Prostate gland (tissue), 2 donors: ENCODE measurements at regions of chr5 and their contacts with region 1.

Region 1: DNA sequence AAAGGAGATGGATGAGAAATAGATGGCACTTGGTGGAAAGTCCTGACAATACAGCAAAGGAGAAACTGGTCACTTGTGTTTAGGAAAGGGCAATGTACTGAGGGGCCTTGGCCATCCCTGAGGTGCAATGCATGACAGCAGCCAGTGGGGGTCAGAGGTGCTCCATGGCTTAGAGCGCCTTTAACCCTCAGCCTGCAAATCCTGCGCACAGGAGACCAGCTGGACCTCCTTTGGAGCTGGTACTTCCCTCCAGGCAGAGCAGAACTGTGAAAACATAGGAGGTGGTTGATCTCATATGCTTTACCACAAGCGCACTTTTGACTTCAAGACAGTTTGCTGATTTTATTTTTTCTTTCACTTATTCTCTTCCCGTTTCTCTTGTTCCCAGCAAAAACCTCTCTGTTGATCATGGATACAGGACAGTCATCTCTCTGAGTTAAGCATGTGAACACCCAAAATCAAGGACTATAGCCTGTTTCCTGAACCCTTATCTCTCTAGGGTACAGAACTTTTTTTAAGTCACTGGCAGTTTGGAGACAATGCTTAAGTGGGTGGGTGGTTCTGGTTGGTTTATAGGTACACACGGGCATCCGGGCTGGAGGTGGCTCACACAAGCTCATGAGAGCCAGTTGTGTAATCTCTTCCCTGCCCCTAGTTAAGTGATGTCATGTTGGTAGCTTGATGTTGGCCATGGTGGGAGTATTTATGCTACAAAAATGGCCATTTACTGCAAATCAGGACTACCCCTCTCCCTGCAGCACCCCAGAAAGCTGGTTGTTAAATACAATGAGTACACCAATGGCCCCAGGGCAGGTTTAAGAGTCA is 37.6 kb upstream of the ANKRD55 start:
- DNase-seq: peak; percentile 78
- H3K4me3 ChIP-seq: no peak overlapping the region
- H3K27ac ChIP-seq: no peak overlapping the region
- H3K4me1 ChIP-seq: no peaks in the 10 kb centered on the region
- H3K27me3 ChIP-seq: no peaks in the 10 kb centered on the region
- CTCF ChIP-seq: peak; percentile 86 to 96 (median 92)
- POLR2A ChIP-seq: no peak

Region 2: DNA sequence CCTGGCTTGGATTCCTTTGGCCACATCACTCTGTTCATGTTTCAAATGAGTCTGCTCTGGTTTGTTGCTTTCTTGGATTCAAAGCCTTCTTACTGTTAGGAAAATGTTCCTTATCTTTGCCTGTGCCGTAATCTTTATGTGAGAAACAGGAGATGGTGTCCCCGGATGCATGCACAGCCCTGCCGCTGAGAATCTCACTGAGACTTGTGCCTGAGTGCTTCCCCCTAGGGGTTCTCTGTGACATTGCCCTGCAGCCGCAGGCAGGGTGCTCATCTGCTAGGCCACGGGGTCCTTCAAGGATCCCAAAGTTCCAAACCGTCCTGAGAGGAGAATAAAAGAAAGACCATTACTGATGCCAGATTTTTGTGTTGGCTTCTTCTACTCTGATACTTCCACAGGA is 43.7 kb after region 1 on chr5:
- intact Hi-C with region 1: no loop called
- DNase-seq: no peak
- H3K4me3 ChIP-seq: no peak overlapping the region
- H3K27ac ChIP-seq: no peak overlapping the region
- H3K4me1 ChIP-seq: no peaks in the 10 kb centered on the region
- H3K27me3 ChIP-seq: no peaks in the 10 kb centered on the region
- CTCF ChIP-seq: peak in 2 of 4 experiments; percentile 12 to 20
- POLR2A ChIP-seq: no peak

Region 3: GRCh38 chr5:56396634-56397033 is 125.9 kb after region 1 on chr5:
- intact Hi-C with region 1: no loop called
- DNase-seq: no peak
- H3K4me3 ChIP-seq: no peak overlapping the region
- H3K27ac ChIP-seq: no peak overlapping the region
- H3K4me1 ChIP-seq: no peaks in the 10 kb centered on the region
- H3K27me3 ChIP-seq: no peaks in the 10 kb centered on the region
- CTCF ChIP-seq: no peak
- POLR2A ChIP-seq: no peak

Region 4: DNA sequence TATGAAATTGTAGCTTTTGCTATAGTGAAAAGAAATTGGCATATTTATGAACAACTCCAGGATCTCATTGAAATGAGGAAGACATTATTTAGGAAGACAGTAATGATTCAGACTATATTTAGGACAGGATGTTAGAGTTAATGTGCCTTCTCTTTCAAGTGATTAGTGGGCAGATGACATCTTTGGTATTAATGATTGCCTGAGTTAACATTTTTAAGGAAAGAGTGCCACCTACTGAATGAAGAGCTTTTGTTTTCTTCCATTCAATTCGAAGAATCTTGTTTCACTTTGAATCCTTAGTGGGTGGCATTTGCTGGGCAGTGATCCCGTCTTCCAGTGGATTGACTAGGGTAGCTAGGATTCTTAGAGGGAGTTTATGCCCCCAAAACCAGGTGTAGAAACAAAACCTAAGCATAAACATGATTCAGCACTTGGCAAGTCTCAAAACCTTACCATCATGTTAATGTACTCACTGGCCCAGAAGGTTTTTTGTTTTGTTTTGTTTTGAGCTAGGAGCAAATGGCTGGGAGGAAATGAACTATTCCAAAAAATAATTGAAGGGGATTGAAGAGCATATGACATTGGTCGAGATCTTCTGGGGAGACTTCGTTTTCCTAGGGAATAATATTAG is 567.7 kb after region 1 on chr5:
- intact Hi-C with region 1: loop called (anchors 2 kb)
- DNase-seq: no peak
- H3K4me3 ChIP-seq: no peak overlapping the region
- H3K27ac ChIP-seq: no peak overlapping the region
- H3K4me1 ChIP-seq: no peaks in the 10 kb centered on the region
- H3K27me3 ChIP-seq: no peaks in the 10 kb centered on the region
- CTCF ChIP-seq: peak in 3 of 4 experiments; percentile 55 to 72 (median 70)
- POLR2A ChIP-seq: no peak

Region 5: GRCh38 chr5:57221049-57221568 is 950.3 kb after region 1 on chr5:
- intact Hi-C with region 1: loop called (anchors 5 kb)
- DNase-seq: peak; percentile 38
- H3K4me3 ChIP-seq: no peak overlapping the region
- H3K27ac ChIP-seq: no peak overlapping the region
- H3K4me1 ChIP-seq: no peaks in the 10 kb centered on the region
- H3K27me3 ChIP-seq: no peaks in the 10 kb centered on the region
- CTCF ChIP-seq: peak; percentile 61 to 93 (median 84)
- POLR2A ChIP-seq: no peak